ENCODE measurements at regions of chr5 and their contacts with region 1.

Region 1: GRCh38 chr5:138352071-138352721 is at the start of gene KDM3B:
- DNase-seq: peak; percentile 42 to 83
- ATAC-seq: peak; percentile 50 to 80
- H3K4me3 ChIP-seq: peak within 1 kb of the TSS; percentile 73 to 98 (median 91)
- H3K27ac ChIP-seq: peak within 1 kb of the TSS; percentile 89 to 98 (median 95)
- H3K4me1 ChIP-seq: peaks cover 28 to 41% of the 10 kb centered on the region in 2 donors
- H3K27me3 ChIP-seq: no peaks in the 10 kb centered on the region
- CTCF ChIP-seq: peak; percentile 85 to 100 (median 97)
- POLR2A ChIP-seq: no peak
- total RNA-seq, gene KDM3B: 49.4 to 100 (median 74.2) TPM

Region 2: DNA sequence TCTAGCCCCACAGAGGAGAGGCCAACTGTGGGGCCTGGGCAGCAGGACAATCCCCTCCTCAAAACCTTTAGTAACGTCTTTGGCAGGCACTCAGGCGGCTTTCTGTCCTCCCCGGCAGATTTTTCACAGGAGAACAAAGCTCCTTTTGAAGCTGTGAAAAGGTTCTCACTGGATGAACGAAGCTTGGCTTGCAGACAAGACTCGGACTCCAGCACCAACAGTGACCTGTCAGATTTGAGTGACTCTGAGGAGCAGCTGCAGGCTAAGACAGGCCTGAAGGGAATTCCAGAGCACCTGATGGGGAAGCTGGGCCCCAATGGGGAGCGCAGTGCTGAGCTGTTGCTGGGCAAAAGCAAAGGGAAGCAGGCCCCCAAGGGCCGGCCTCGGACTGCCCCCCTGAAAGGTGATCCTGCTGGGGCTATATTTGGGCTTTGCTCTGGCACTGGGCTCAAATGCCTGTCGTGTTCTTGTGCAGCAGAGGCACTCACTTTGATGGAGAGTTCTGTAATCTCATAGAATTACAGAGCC is 39.7 kb after region 1 on chr5:
- in situ Hi-C with region 1: no loop called
- intact Hi-C with region 1: loop called (anchors 5 kb)
- DNase-seq: peak; percentile 57 to 79
- ATAC-seq: peak; percentile 48 to 69
- H3K4me3 ChIP-seq: no peak overlapping the region
- H3K27ac ChIP-seq: peak overlapping the region; percentile 82 to 95 (median 90)
- H3K4me1 ChIP-seq: peaks cover 50 to 59% of the 10 kb centered on the region in 2 donors
- H3K27me3 ChIP-seq: no peaks in the 10 kb centered on the region
- CTCF ChIP-seq: no peak
- POLR2A ChIP-seq: no peak

Region 3: GRCh38 chr5:138408023-138408422 is 55.8 kb after region 1 on chr5:
- in situ Hi-C with region 1: no loop called
- intact Hi-C with region 1: loop called (anchors 5 kb)
- DNase-seq: no peak
- ATAC-seq: no peak
- H3K4me3 ChIP-seq: no peak overlapping the region
- H3K27ac ChIP-seq: no peak overlapping the region
- H3K4me1 ChIP-seq: no peaks in the 10 kb centered on the region
- H3K27me3 ChIP-seq: no peaks in the 10 kb centered on the region
- CTCF ChIP-seq: no peak
- POLR2A ChIP-seq: no peak